ENCODE measurements at regions of chr12 and their contacts with region 1.

Region 1: DNA sequence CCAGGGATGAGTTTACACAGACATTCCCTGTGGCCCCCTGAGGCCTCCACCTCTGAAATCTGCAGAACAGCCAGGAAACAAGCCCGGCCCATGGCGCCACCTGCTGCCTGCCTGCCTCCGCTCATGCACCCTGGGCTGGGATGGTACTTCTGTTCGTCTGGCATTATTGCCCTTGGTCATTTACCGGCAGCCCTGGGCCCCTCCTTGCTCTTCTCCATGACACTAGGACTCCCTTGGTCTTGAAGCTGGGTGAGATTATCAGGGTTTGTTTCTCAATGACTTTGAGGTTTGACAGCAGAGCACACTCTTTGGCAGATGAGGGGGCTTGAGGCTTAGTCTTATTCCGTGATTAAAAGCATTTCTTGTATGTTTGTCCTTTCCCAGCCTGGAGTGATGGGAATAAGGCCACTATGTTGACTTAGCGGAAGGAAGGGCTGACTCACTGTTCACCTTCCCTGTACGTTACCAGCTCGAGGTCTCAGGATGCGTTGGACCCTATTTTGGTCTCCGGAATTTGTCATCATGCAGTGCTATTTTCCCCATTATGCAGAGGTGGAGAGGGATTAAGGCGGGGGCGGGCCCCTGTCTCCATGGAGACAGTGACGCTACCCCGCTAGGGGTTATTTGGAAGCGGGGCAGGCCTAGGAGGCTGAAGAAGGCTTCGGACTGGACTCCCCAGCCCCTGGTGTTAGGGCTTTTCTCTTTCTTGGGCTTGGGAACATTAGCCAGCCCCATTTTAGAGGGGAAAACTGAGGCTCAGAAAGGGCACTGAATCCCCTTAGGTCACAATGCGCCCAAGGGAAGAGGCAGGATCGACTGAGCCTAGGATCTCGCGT is 706 bp upstream of the PEX5 start:
- DNase-seq: peak; percentile 88
- ATAC-seq: peak; percentile 64
- H3K4me3 Mint-ChIP-seq: peak overlapping the region; percentile 85
- H3K27ac Mint-ChIP-seq: peak overlapping the region; percentile 94
- H3K4me1 Mint-ChIP-seq: peaks cover 35% of the 10 kb centered on the region
- H3K27me3 Mint-ChIP-seq: no peaks in the 10 kb centered on the region

Region 2: GRCh38 chr12:6723607-6724396 is 465.0 kb before region 1 on chr12 and contains the start of gene COPS7A:
- CTCF ChIA-PET with region 1: no interaction called
- POLR2A ChIA-PET with region 1: no interaction called
- intact Hi-C with region 1: loop called in 1 of 2 experiments (anchors 1 kb)
- DNase-seq: peak; percentile 98
- ATAC-seq: peak; percentile 96
- H3K4me3 Mint-ChIP-seq: peak within 1 kb of the TSS; percentile 80
- H3K27ac Mint-ChIP-seq: peak within 1 kb of the TSS; percentile 97
- H3K4me1 Mint-ChIP-seq: peaks cover 18% of the 10 kb centered on the region
- H3K27me3 Mint-ChIP-seq: no peaks in the 10 kb centered on the region
- total RNA-seq, gene COPS7A: 38.3 to 41.6 TPM

Region 3: DNA sequence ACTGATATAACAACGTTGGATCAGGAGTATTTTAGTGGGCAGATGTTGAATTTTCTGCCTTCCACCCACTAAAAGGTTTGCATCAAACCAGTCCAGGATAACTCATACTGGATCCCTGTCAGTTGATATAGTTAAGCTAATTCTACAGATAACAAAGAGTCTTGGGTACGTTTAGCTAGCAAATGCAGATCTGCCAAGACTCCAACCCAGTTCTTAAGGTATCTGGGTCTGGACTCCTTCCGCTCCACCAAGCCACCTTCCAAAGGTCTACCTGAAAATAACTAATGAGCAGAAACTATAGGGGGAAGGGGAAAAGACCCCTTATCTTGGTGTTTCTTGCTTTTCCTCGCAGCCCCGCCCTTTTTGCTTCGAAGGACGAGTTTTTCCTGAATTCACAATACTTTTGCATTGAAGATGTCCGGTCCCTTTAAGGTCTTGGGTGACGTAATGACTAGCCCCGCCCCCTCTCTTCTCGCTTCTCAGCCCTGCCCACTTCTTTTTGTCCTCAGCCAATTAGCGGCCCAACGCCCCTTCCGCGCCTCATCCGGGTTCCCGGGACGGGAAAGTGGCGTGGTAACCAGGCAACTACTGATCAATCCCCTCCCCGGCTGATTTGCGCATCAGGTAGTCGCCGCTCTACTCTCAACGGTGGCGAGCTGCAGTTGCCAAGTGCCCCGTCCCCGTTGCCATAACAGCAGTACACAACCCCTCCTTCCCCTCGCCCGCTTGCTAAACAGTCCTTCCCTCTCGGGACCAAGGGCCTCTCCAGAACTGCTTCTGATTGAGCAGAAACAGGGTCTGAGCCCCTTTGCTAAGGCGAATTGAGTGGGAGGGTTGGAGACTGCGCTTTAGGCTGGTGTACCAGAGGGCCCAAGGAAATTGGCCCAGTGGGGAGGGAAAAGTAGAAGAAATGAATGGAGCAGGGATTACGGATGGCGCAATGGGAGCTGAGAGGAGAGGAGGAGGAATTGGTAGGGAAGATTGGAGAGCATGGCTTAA is 284.2 kb before region 1 on chr12 and contains the start of gene LRRC23:
- CTCF ChIA-PET with region 1: no interaction called
- POLR2A ChIA-PET with region 1: no interaction called
- intact Hi-C with region 1: loop called in 1 of 2 experiments (anchors 1 kb)
- DNase-seq: peak; percentile 99
- ATAC-seq: peak; percentile 97
- H3K4me3 Mint-ChIP-seq: no peak within 1 kb of the TSS
- H3K27ac Mint-ChIP-seq: no peak within 1 kb of the TSS
- H3K4me1 Mint-ChIP-seq: peaks cover 14% of the 10 kb centered on the region
- H3K27me3 Mint-ChIP-seq: no peaks in the 10 kb centered on the region
- total RNA-seq, gene LRRC23: 6.4 to 7.0 TPM

Region 4: GRCh38 chr12:7018350-7019042 is 170.3 kb before region 1 on chr12 and contains the start of gene LPCAT3:
- CTCF ChIA-PET with region 1: interaction called, 4 read pairs
- POLR2A ChIA-PET with region 1: no interaction called
- intact Hi-C with region 1: loop called in 1 of 2 experiments (anchors 1 kb)
- DNase-seq: peak; percentile 98
- ATAC-seq: peak; percentile 98
- H3K4me3 Mint-ChIP-seq: peak within 1 kb of the TSS; percentile 83
- H3K27ac Mint-ChIP-seq: peak within 1 kb of the TSS; percentile 80
- H3K4me1 Mint-ChIP-seq: peaks cover 29% of the 10 kb centered on the region
- H3K27me3 Mint-ChIP-seq: no peaks in the 10 kb centered on the region
- total RNA-seq, gene LPCAT3: 20.8 to 28.0 TPM

Region 5: GRCh38 chr12:7129872-7130680 is 58.7 kb before region 1 on chr12 and contains the start of gene CLSTN3:
- CTCF ChIA-PET with region 1: no interaction called
- POLR2A ChIA-PET with region 1: no interaction called
- intact Hi-C with region 1: loop called in 1 of 2 experiments (anchors 1 kb)
- DNase-seq: peak; percentile 93
- ATAC-seq: peak; percentile 89
- H3K4me3 Mint-ChIP-seq: peak within 1 kb of the TSS; percentile 80
- H3K27ac Mint-ChIP-seq: peak within 1 kb of the TSS; percentile 74
- H3K4me1 Mint-ChIP-seq: peaks cover 31% of the 10 kb centered on the region
- H3K27me3 Mint-ChIP-seq: no peaks in the 10 kb centered on the region
- total RNA-seq, gene CLSTN3: 28.2 to 37.9 TPM

Region 6: DNA sequence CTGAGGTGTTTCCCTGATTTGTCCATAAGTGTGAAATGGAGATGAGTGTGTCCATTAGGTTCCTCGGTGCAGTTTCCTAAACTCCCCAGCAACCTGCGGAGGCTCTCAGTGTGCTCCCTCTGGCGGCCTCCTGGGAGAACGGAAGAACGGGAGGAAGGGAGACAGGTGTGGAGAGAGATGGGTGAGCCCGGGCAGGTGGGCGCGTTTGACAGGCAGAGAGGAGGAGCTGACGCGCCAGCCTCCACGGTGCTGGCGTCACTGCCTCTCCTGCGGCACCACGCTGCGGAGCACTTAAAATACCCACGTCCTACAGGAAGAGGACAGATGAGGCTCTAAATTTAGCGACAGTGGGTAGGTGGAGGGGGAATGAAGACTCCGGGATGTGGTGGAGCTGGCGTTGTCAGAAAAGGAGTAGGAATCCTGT is 26.1 kb before region 1 on chr12:
- CTCF ChIA-PET with region 1: interaction called, 10 read pairs
- POLR2A ChIA-PET with region 1: no interaction called
- intact Hi-C with region 1: loop called in 1 of 2 experiments (anchors 1 kb)
- DNase-seq: peak; percentile 62
- ATAC-seq: peak; percentile 80
- H3K4me3 Mint-ChIP-seq: peak overlapping the region; percentile 15
- H3K27ac Mint-ChIP-seq: no peak overlapping the region
- H3K4me1 Mint-ChIP-seq: peaks cover 11% of the 10 kb centered on the region
- H3K27me3 Mint-ChIP-seq: peaks cover 14% of the 10 kb centered on the region

Region 7: DNA sequence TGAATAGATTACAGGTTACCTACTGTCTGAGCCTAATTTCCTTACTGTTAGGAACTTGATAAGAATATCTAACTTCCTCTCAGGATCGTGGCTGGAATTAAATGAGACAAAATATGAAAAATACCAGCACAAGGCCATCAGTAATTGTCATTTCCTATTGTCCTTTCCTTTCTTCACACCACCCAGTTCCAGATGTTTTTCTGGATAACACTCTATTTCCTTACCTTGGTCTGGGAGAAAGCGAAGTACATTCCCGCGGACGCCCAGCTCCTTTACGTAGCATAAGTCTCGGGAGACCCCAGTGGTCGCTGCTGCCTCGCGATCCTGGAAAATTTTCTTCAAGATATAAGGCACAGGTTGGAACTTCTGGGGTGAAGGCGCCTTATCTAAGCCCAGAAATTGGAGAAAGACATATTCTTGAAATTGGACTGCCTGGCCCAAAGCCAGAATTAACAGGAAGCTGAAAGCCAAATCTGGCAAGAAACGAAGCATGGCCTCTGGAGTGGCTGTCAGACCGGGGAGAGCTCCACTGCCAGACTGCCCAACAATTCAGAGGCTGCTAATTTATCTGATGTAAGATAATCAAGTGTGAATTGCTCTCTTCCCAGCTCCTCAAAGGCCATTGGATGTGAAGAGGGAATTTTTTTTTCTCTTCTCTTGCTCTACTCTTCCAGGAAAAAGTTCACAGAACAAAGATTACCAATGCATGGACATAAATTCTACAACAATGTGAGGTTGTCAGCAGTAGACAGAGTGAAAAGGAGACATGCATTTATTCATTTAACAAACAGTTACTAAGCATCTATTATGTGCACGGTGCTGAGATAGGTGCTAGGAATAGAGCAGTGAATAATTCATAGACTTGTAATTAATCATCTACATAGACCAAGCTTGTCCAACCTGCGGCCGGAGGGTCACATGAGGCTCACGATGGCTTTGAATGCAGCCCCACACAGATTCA is 506.7 kb after region 1 on chr12 and contains the start of gene GDF3:
- CTCF ChIA-PET with region 1: no interaction called
- POLR2A ChIA-PET with region 1: no interaction called
- intact Hi-C with region 1: no loop called
- DNase-seq: no peak
- ATAC-seq: no peak
- H3K4me3 Mint-ChIP-seq: no peak within 1 kb of the TSS
- H3K27ac Mint-ChIP-seq: no peak within 1 kb of the TSS
- H3K4me1 Mint-ChIP-seq: peaks cover 2% of the 10 kb centered on the region
- H3K27me3 Mint-ChIP-seq: peaks cover 2% of the 10 kb centered on the region
- total RNA-seq, gene GDF3: not detected

Region 8: GRCh38 chr12:8026291-8026900 is 837.6 kb after region 1 on chr12:
- CTCF ChIA-PET with region 1: no interaction called
- POLR2A ChIA-PET with region 1: no interaction called
- intact Hi-C with region 1: loop called in 1 of 2 experiments (anchors 2 kb)
- DNase-seq: peak; percentile 98
- ATAC-seq: peak; percentile 97
- H3K4me3 Mint-ChIP-seq: peak overlapping the region; percentile 92
- H3K27ac Mint-ChIP-seq: peak overlapping the region; percentile 97
- H3K4me1 Mint-ChIP-seq: peaks cover 11% of the 10 kb centered on the region
- H3K27me3 Mint-ChIP-seq: no peaks in the 10 kb centered on the region